Left colon (tissue), 2 donors: ENCODE measurements at regions of chr9 and their contacts with region 1.

Region 1: GRCh38 chr9:23855873-23856604 is 30.0 kb upstream of the ELAVL2 start:
- DNase-seq: no peak
- ATAC-seq: no peak

Region 2: DNA sequence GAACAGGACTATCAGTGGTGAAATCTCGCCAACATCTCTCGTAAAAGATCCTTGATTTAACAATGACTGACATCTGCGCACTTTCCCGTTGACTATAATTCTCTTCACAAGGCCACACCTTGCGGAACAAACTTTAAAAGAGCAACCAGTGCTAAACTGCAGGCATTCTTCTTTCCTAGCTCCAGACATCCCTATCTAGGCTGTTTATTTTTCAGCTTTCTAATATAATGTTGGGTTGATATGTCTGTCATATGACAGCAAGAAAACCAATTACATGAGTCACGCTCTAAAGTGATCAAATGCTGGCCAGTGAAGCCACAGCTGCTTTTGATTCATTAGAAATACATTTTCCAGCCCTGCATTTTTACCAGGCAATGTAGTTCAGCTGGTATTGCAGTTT is 192.5 kb before region 1 on chr9:
- intact Hi-C with region 1: no loop called
- DNase-seq: peak in 1 of 2 donors; percentile 7
- ATAC-seq: peak; percentile 91

Region 3: GRCh38 chr9:24464319-24464951 is 608.4 kb after region 1 on chr9:
- intact Hi-C with region 1: no loop called
- DNase-seq: no peak
- ATAC-seq: no peak

Region 4: GRCh38 chr9:25010027-25010662 is 1154.1 kb after region 1 on chr9:
- intact Hi-C with region 1: loop called in 1 of 2 experiments (anchors 10 kb)
- DNase-seq: no peak
- ATAC-seq: no peak